Adrenal gland (tissue), 19 donors: ENCODE measurements at regions of chr17 and their contacts with region 1.

Region 1: GRCh38 chr17:47229535-47230443 is 20.6 kb downstream of the MYL4 start:
- DNase-seq: peak; percentile 82 to 96 (median 91)
- H3K4me3 ChIP-seq: peak overlapping the region in 1 of 4 donors; percentile 4
- H3K27ac ChIP-seq: peak overlapping the region in 2 of 5 donors; percentile 8 to 18
- H3K4me1 ChIP-seq: peaks cover 5 to 23% of the 10 kb centered on the region in 2 donors
- H3K27me3 ChIP-seq: no peaks in the 10 kb centered on the region
- CTCF ChIP-seq: peak; percentile 90 to 99 (median 98)
- POLR2A ChIP-seq: no peak

Region 2: GRCh38 chr17:47172698-47173565 is 56.9 kb before region 1 on chr17:
- intact Hi-C with region 1: loop called in 1 of 2 experiments (anchors 10 kb)
- DNase-seq: no peak
- H3K4me3 ChIP-seq: no peak overlapping the region
- H3K27ac ChIP-seq: no peak overlapping the region
- H3K4me1 ChIP-seq: peaks cover 0 to 13% of the 10 kb centered on the region in 2 donors
- H3K27me3 ChIP-seq: no peaks in the 10 kb centered on the region
- CTCF ChIP-seq: no peak
- POLR2A ChIP-seq: no peak